Gastrocnemius medialis (tissue), 4 donors: ENCODE measurements at regions of chr6 and their contacts with region 1.

Region 1: GRCh38 chr6:162736961-162737360 is 9.2 kb downstream of the PACRG start:
- DNase-seq: no peak
- ATAC-seq: no peak
- H3K4me3 ChIP-seq: no peak overlapping the region
- H3K27ac ChIP-seq: no peak overlapping the region
- H3K4me1 ChIP-seq: no peaks in the 10 kb centered on the region
- H3K27me3 ChIP-seq: no peaks in the 10 kb centered on the region
- CTCF ChIP-seq: peak in 2 of 5 experiments; percentile 37 to 45
- POLR2A ChIP-seq: no peak

Region 2: GRCh38 chr6:161804838-161805237 is 932.1 kb before region 1 on chr6:
- in situ Hi-C with region 1: no loop called
- intact Hi-C with region 1: no loop called
- DNase-seq: no peak
- ATAC-seq: no peak
- H3K4me3 ChIP-seq: no peak overlapping the region
- H3K27ac ChIP-seq: no peak overlapping the region
- H3K4me1 ChIP-seq: no peaks in the 10 kb centered on the region
- H3K27me3 ChIP-seq: no peaks in the 10 kb centered on the region
- CTCF ChIP-seq: no peak
- POLR2A ChIP-seq: no peak

Region 3: DNA sequence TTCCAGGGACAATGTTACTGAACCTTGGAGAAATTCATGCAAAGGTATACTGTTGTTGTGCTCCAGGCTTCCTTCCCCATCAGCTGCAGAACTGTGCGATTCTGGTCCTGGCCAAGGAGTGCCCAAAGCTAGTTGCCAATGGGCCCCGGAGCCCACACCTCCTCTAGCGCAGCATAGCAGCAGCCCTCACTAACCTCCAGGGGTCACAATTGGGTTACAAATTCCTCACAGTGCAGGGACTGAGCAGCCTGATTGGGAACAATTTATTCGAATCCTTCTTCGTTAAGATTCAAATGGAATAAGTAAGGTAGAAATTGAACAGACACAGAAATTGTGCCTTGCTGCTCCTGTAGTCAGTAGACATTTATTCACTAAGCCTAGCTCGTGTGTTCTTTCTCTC is 294.3 kb before region 1 on chr6:
- in situ Hi-C with region 1: no loop called
- intact Hi-C with region 1: loop called (anchors 5 kb)
- DNase-seq: no peak
- ATAC-seq: no peak
- H3K4me3 ChIP-seq: no peak overlapping the region
- H3K27ac ChIP-seq: no peak overlapping the region
- H3K4me1 ChIP-seq: no peaks in the 10 kb centered on the region
- H3K27me3 ChIP-seq: no peaks in the 10 kb centered on the region
- CTCF ChIP-seq: no peak
- POLR2A ChIP-seq: no peak

Region 4: GRCh38 chr6:162560891-162561290 is 176.1 kb before region 1 on chr6:
- in situ Hi-C with region 1: no loop called
- intact Hi-C with region 1: loop called (anchors 2 kb)
- DNase-seq: no peak
- ATAC-seq: no peak
- H3K4me3 ChIP-seq: no peak overlapping the region
- H3K27ac ChIP-seq: no peak overlapping the region
- H3K4me1 ChIP-seq: no peaks in the 10 kb centered on the region
- H3K27me3 ChIP-seq: no peaks in the 10 kb centered on the region
- CTCF ChIP-seq: no peak
- POLR2A ChIP-seq: no peak